CD4-positive, alpha-beta memory T cell (primary cell): ENCODE measurements at regions of chr17 and their contacts with region 1.

Region 1: GRCh38 chr17:48074315-48075081 is 26.3 kb downstream of the NFE2L1 start:
- DNase-seq: peak; percentile 64 to 85 (median 69)
- H3K4me3 ChIP-seq: no peak overlapping the region
- H3K4me3 Mint-ChIP-seq: no peak overlapping the region
- H3K27ac ChIP-seq: no peak overlapping the region
- H3K27ac Mint-ChIP-seq: peak overlapping the region in 2 of 7 donors; percentile 48 to 57
- H3K4me1 ChIP-seq: no peaks in the 10 kb centered on the region
- H3K4me1 Mint-ChIP-seq: peaks cover 0 to 6% (median 2%) of the 10 kb centered on the region in 4 donors
- H3K27me3 ChIP-seq: no peaks in the 10 kb centered on the region
- H3K27me3 Mint-ChIP-seq: no peaks in the 10 kb centered on the region

Region 2: GRCh38 chr17:47708863-47709541 is 365.5 kb before region 1 on chr17:
- CTCF ChIA-PET with region 1: no interaction called
- POLR2A ChIA-PET with region 1: no interaction called
- intact Hi-C with region 1: no loop called
- DNase-seq: peak in 1 of 5 donors; percentile 23
- H3K4me3 ChIP-seq: no peak overlapping the region
- H3K4me3 Mint-ChIP-seq: no peak overlapping the region
- H3K27ac ChIP-seq: no peak overlapping the region
- H3K27ac Mint-ChIP-seq: no peak overlapping the region
- H3K4me1 ChIP-seq: peaks cover 45% of the 10 kb centered on the region
- H3K4me1 Mint-ChIP-seq: peaks cover 39 to 68% (median 53%) of the 10 kb centered on the region in 4 donors
- H3K27me3 ChIP-seq: no peaks in the 10 kb centered on the region
- H3K27me3 Mint-ChIP-seq: no peaks in the 10 kb centered on the region

Region 3: GRCh38 chr17:47978324-47978723 is 96.2 kb before region 1 on chr17:
- CTCF ChIA-PET with region 1: interaction called, 22 read pairs
- POLR2A ChIA-PET with region 1: no interaction called
- intact Hi-C with region 1: loop called (anchors 1 kb)
- DNase-seq: peak in 4 of 5 donors; percentile 33 to 48 (median 40)
- H3K4me3 ChIP-seq: no peak overlapping the region
- H3K4me3 Mint-ChIP-seq: no peak overlapping the region
- H3K27ac ChIP-seq: no peak overlapping the region
- H3K27ac Mint-ChIP-seq: peak overlapping the region in 2 of 7 donors; percentile 12 to 47
- H3K4me1 ChIP-seq: peaks cover 11% of the 10 kb centered on the region
- H3K4me1 Mint-ChIP-seq: peaks cover 1 to 19% (median 10%) of the 10 kb centered on the region in 4 donors
- H3K27me3 ChIP-seq: no peaks in the 10 kb centered on the region
- H3K27me3 Mint-ChIP-seq: no peaks in the 10 kb centered on the region

Region 4: GRCh38 chr17:48001197-48001596 is 73.3 kb before region 1 on chr17:
- CTCF ChIA-PET with region 1: no interaction called
- POLR2A ChIA-PET with region 1: no interaction called
- intact Hi-C with region 1: no loop called
- DNase-seq: no peak
- H3K4me3 ChIP-seq: no peak overlapping the region
- H3K4me3 Mint-ChIP-seq: no peak overlapping the region
- H3K27ac ChIP-seq: no peak overlapping the region
- H3K27ac Mint-ChIP-seq: no peak overlapping the region
- H3K4me1 ChIP-seq: peaks cover 4% of the 10 kb centered on the region
- H3K4me1 Mint-ChIP-seq: peaks cover 0 to 5% (median under 1%) of the 10 kb centered on the region in 4 donors
- H3K27me3 ChIP-seq: no peaks in the 10 kb centered on the region
- H3K27me3 Mint-ChIP-seq: peaks cover 5 to 17% of the 10 kb centered on the region in 2 donors

Region 5: GRCh38 chr17:48030531-48030930 is 44.0 kb before region 1 on chr17:
- CTCF ChIA-PET with region 1: interaction called, 148 read pairs
- POLR2A ChIA-PET with region 1: interaction called, 6 read pairs
- intact Hi-C with region 1: loop called (anchors 1 kb)
- DNase-seq: no peak
- H3K4me3 ChIP-seq: no peak overlapping the region
- H3K4me3 Mint-ChIP-seq: no peak overlapping the region
- H3K27ac ChIP-seq: no peak overlapping the region
- H3K27ac Mint-ChIP-seq: no peak overlapping the region
- H3K4me1 ChIP-seq: peaks cover 13% of the 10 kb centered on the region
- H3K4me1 Mint-ChIP-seq: peaks cover 3 to 18% (median 11%) of the 10 kb centered on the region in 4 donors
- H3K27me3 ChIP-seq: no peaks in the 10 kb centered on the region
- H3K27me3 Mint-ChIP-seq: peaks cover 5 to 25% of the 10 kb centered on the region in 2 donors

Region 6: GRCh38 chr17:48060249-48060648 is 14.2 kb before region 1 on chr17:
- CTCF ChIA-PET with region 1: interaction called, 17 read pairs
- POLR2A ChIA-PET with region 1: no interaction called
- intact Hi-C with region 1: no loop called
- DNase-seq: no peak
- H3K4me3 ChIP-seq: no peak overlapping the region
- H3K4me3 Mint-ChIP-seq: no peak overlapping the region
- H3K27ac ChIP-seq: no peak overlapping the region
- H3K27ac Mint-ChIP-seq: no peak overlapping the region
- H3K4me1 ChIP-seq: peaks cover under 1% of the 10 kb centered on the region
- H3K4me1 Mint-ChIP-seq: peaks cover 4 to 15% (median 11%) of the 10 kb centered on the region in 4 donors
- H3K27me3 ChIP-seq: no peaks in the 10 kb centered on the region
- H3K27me3 Mint-ChIP-seq: no peaks in the 10 kb centered on the region

Region 7: DNA sequence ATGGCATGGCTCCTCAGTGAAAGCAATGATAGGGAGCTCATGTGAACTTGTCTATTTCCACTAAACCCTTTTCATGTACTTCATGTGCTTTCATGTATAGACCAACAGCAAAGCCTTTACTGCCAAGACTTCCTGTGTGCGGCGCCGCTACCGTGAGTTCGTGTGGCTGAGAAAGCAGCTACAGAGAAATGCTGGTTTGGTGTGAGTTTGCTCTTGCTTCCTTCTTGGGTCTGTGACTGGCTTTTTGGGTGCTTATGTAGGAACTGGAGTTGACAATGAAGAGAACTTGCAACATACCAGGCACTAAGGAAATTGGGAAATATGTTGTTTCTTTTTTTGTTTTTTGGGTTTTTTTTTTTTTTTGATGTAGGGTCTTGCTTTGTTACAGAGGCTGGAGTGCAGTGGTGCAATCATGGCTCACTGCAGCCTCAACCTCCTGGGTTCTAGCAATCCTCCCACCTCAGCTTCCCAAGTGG is 38.7 kb after region 1 on chr17:
- CTCF ChIA-PET with region 1: interaction called, 14 read pairs
- POLR2A ChIA-PET with region 1: no interaction called
- intact Hi-C with region 1: no loop called
- DNase-seq: peak; percentile 41 to 60 (median 55)
- H3K4me3 ChIP-seq: peak overlapping the region in 1 of 2 donors; percentile 41
- H3K4me3 Mint-ChIP-seq: peak overlapping the region; percentile 17 to 78 (median 48)
- H3K27ac ChIP-seq: peak overlapping the region; percentile 16
- H3K27ac Mint-ChIP-seq: peak overlapping the region; percentile 69 to 93 (median 89)
- H3K4me1 ChIP-seq: peaks cover 51% of the 10 kb centered on the region
- H3K4me1 Mint-ChIP-seq: peaks cover 30 to 47% (median 37%) of the 10 kb centered on the region in 4 donors
- H3K27me3 ChIP-seq: no peaks in the 10 kb centered on the region
- H3K27me3 Mint-ChIP-seq: no peaks in the 10 kb centered on the region